Transverse colon (tissue), 4 donors: ENCODE measurements at regions of chr15 and their contacts with region 1.

Region 1: DNA sequence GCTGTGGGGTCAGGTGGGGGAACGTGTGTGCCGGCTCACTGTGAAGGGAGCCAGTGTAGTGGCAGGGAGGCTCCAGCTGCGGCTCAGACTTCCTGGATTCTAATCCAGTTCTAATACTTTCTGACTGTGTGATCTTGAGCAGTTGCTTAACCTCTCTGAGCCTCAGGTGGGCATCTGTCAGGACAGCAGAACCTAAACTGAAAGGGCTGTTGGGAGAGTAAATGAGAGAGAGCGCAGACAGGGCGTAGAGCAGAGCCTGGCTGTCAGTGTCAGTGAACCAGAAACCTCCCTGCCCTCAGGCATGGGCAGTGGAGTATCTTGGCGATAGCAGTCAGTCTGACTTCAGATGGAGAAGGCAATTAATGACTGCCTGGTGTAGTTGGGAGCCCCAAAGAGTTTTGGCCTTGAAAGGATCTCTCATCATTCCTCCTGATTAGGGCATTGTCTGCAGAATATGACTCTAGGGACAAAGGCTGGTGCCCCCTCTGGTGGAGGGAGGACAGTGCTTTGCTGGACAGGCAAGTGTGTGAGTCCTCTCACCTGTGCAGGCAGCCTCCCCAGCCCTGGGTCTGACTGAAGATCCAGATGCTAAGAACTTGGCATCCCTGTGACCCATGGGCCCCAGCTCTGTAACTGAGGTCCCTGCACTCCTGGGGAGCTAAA is 9.6 kb downstream of the KBTBD13 start:
- DNase-seq: peak; percentile 57
- H3K4me3 ChIP-seq: no peak overlapping the region
- H3K27ac ChIP-seq: peak overlapping the region; percentile 84 to 91 (median 88)
- H3K4me1 ChIP-seq: peaks cover 35 to 61% (median 50%) of the 10 kb centered on the region in 4 donors
- H3K27me3 ChIP-seq: no peaks in the 10 kb centered on the region
- CTCF ChIP-seq: peak; percentile 22 to 43 (median 33)
- EP300 ChIP-seq: no peak
- POLR2A ChIP-seq: no peak

Region 2: DNA sequence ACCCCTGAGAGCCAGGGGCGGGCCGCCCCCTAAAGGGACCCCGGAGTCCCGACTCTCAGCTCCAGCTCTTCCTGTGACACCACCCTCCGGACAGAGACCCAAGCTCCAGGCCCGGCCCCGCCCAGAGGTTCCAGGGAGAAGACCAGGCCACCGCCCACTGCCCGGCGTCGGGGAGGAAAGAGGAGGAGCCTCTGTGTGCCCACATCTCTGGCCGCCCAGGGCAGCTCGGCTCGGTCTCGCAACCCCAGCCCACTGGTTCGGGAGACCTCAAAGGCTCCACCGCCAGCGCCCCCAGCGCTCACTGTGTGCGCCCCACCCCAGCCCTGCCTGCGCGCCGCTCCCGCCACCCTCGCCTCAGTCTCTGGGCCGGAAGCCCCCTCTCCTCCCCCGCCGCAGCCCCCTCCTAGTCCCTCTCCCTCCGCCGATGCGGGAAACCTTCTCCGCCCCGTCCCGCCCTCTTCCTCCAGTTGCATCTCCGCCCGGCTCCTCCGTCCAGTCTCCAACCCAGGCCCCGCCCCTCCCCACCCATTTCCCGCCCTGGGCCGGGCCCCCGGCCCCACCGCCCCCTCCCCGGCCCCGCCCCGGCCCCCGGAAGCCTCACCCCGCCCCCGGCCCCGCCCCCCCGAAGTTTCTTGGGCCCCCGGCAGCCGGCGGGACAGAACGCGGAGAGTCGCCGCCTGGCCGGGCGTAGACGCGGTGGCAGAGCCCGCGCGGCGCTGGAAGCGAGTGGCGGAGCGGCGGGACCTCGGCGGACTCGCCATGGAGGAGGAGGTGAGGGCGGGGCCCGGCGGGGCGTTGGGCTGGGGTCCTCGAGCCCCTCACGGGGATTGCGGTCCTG is 244.7 kb before region 1 on chr15 and contains the start of gene PLEKHO2:
- in situ Hi-C with region 1: no loop called
- intact Hi-C with region 1: no loop called
- DNase-seq: peak; percentile 95
- H3K4me3 ChIP-seq: peak within 1 kb of the TSS; percentile 69 to 100 (median 88)
- H3K27ac ChIP-seq: peak within 1 kb of the TSS; percentile 89 to 96 (median 94)
- H3K4me1 ChIP-seq: peaks cover 11 to 48% (median 26%) of the 10 kb centered on the region in 4 donors
- H3K27me3 ChIP-seq: peaks cover 3% of the 10 kb centered on the region
- CTCF ChIP-seq: peak in 1 of 5 experiments; percentile 6
- EP300 ChIP-seq: no peak
- POLR2A ChIP-seq: peak; percentile 72
- total RNA-seq, gene PLEKHO2: 4.6 to 12.3 (median 9.8) TPM

Region 3: GRCh38 chr15:65067645-65068402 is 18.3 kb before region 1 on chr15 and contains the start of gene RASL12:
- in situ Hi-C with region 1: no loop called
- intact Hi-C with region 1: loop called (anchors 1 kb)
- DNase-seq: peak; percentile 37
- H3K4me3 ChIP-seq: peak within 1 kb of the TSS; percentile 32 to 50 (median 42)
- H3K27ac ChIP-seq: peak within 1 kb of the TSS; percentile 85 to 90 (median 86)
- H3K4me1 ChIP-seq: peaks cover 3 to 51% (median 31%) of the 10 kb centered on the region in 4 donors
- H3K27me3 ChIP-seq: peaks cover 18% of the 10 kb centered on the region
- CTCF ChIP-seq: no peak
- EP300 ChIP-seq: no peak
- POLR2A ChIP-seq: no peak
- total RNA-seq, gene RASL12: 13.9 to 46.8 (median 16.4) TPM

Region 4: GRCh38 chr15:65939901-65940617 is 853.9 kb after region 1 on chr15:
- in situ Hi-C with region 1: no loop called
- intact Hi-C with region 1: no loop called
- DNase-seq: no peak
- H3K4me3 ChIP-seq: no peak overlapping the region
- H3K27ac ChIP-seq: no peak overlapping the region
- H3K4me1 ChIP-seq: no peaks in the 10 kb centered on the region
- H3K27me3 ChIP-seq: no peaks in the 10 kb centered on the region
- CTCF ChIP-seq: no peak
- EP300 ChIP-seq: no peak
- POLR2A ChIP-seq: no peak